Activated CD4-positive, alpha-beta memory T cell treated with anti-CD3 and anti-CD28 coated beads, Interleukin-2, amount 10 ng/mL, durations not matched to agents 7 days and 5 days (primary cell): ENCODE measurements at regions of chr10 and their contacts with region 1.

Region 1: DNA sequence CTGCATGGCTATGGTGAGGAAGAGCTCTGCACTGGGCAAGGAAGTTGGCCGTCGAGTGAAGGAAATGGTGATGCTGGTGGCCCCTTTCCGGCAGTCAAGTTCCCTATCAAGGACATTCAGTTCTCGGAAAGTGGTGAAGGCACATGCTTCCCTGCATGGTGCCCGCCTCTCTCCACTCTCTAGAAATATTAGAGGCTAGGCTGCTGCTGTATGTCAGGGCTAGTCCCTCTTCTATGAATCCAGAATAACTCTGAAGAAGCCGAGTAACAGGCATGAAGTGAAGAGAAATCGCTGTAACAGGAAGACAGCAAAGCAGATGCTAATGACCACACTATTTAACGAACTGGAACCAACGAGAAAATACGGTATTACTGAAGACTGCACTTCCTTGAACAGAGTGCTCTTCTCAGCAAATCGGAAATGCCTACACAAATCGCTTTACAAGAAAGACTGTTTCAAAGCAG is 5.4 kb downstream of the IDI1 start:
- DNase-seq: peak; percentile 53
- H3K4me3 Mint-ChIP-seq: peak overlapping the region; percentile 74
- H3K27ac Mint-ChIP-seq: peak overlapping the region; percentile 91
- H3K4me1 Mint-ChIP-seq: peaks cover 58% of the 10 kb centered on the region
- H3K27me3 Mint-ChIP-seq: no peaks in the 10 kb centered on the region

Region 2: DNA sequence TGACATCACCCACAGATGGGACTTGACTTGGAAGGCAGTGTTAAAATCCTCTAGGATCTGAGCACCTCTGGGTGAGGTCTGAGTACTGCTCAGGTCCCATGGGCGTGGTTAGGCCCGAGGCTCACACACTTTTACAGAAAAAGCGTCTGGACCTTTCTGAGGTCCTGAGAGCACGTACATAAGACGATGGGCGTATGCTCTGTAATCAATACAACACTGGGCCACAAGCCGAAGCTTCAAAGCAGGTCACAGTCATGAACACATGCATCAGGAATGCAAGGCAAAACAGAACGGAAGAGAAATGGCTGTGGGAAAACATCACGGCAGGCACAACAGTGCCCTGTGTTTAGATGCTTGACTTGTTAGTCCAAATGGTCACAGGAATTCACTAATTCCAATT is 224.2 kb before region 1 on chr10:
- CTCF ChIA-PET with region 1: no interaction called
- POLR2A ChIA-PET with region 1: no interaction called
- DNase-seq: no peak
- H3K4me3 Mint-ChIP-seq: no peak overlapping the region
- H3K27ac Mint-ChIP-seq: no peak overlapping the region
- H3K4me1 Mint-ChIP-seq: peaks cover 39% of the 10 kb centered on the region
- H3K27me3 Mint-ChIP-seq: no peaks in the 10 kb centered on the region

Region 3: DNA sequence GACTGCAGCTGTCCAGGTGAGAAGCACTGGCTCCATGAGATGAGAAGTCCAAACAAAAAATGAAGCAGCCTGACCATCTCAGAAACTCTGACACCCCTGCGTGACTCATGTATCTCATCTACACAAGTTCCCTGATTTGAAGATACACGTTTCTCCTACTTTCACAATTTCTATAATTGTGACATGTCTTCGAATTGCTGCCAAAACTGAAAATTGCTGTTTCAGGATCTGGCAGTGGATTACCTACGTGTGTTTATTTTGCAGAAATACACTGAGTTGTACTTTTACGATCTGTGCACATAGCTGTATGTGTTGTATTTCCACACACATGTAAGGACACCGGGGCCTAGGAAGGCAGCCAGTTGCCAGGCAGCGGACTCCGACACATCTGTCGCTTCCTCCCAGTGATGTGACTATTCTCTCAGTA is 165.2 kb before region 1 on chr10:
- CTCF ChIA-PET with region 1: no interaction called
- POLR2A ChIA-PET with region 1: no interaction called
- DNase-seq: no peak
- H3K4me3 Mint-ChIP-seq: no peak overlapping the region
- H3K27ac Mint-ChIP-seq: no peak overlapping the region
- H3K4me1 Mint-ChIP-seq: peaks cover 5% of the 10 kb centered on the region
- H3K27me3 Mint-ChIP-seq: no peaks in the 10 kb centered on the region

Region 4: DNA sequence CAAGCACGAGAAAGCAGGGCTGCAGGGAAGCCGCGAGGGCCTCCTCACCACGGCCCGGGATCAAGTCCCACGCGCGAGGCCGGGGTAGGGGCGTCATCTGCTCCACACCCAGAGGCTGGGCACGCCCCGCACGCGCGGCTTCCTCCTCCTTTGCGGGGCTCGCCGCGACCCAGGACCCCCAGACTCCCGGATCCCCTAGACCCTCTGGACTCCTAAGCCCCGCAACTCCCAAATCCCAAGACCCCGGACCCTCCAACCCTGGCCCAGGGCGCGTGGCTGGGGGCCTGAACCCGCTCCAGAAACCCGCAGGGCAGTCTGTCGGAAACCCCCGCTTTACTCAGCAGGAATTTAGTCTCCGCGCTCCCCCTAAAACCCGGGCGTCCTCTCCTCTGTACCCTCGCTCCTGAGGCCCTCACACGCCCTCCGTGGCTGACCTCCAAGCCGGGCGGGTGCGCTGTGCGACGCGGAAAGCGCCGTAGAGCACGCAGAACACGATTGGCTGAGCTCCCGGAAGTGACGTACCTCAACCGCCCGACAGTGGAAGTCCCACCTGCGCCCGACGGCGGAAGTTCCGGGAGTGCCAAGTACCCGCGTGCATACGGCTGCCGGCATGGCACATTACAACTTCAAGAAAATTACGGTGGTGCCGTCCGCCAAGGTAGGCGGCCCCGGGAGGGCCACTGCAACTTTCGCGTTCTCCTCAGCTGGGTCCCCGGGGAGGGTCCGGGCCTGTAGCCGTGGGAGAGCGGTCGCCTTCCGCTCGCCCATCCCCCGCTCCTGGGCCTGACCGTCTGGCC is 55.5 kb before region 1 on chr10 and contains the start of gene GTPBP4:
- CTCF ChIA-PET with region 1: interaction called, 5 read pairs
- POLR2A ChIA-PET with region 1: interaction called, 26 read pairs
- DNase-seq: peak; percentile 97
- H3K4me3 Mint-ChIP-seq: peak within 1 kb of the TSS; percentile 98
- H3K27ac Mint-ChIP-seq: peak within 1 kb of the TSS; percentile 85
- H3K4me1 Mint-ChIP-seq: peaks cover 39% of the 10 kb centered on the region
- H3K27me3 Mint-ChIP-seq: no peaks in the 10 kb centered on the region
- total RNA-seq, gene GTPBP4: 50.9 to 59.6 TPM

Region 5: GRCh38 chr10:1056326-1057105 is 13.0 kb after region 1 on chr10 and contains the start of gene WDR37:
- CTCF ChIA-PET with region 1: interaction called, 8 read pairs
- POLR2A ChIA-PET with region 1: interaction called, 67 read pairs
- DNase-seq: peak; percentile 89
- H3K4me3 Mint-ChIP-seq: peak within 1 kb of the TSS; percentile 99
- H3K27ac Mint-ChIP-seq: peak within 1 kb of the TSS; percentile 96
- H3K4me1 Mint-ChIP-seq: peaks cover 87% of the 10 kb centered on the region
- H3K27me3 Mint-ChIP-seq: no peaks in the 10 kb centered on the region
- total RNA-seq, gene WDR37: 31.4 to 31.6 TPM